GM12878 (cell line): ENCODE measurements at regions of chr6 and their contacts with region 1.

Region 1: DNA sequence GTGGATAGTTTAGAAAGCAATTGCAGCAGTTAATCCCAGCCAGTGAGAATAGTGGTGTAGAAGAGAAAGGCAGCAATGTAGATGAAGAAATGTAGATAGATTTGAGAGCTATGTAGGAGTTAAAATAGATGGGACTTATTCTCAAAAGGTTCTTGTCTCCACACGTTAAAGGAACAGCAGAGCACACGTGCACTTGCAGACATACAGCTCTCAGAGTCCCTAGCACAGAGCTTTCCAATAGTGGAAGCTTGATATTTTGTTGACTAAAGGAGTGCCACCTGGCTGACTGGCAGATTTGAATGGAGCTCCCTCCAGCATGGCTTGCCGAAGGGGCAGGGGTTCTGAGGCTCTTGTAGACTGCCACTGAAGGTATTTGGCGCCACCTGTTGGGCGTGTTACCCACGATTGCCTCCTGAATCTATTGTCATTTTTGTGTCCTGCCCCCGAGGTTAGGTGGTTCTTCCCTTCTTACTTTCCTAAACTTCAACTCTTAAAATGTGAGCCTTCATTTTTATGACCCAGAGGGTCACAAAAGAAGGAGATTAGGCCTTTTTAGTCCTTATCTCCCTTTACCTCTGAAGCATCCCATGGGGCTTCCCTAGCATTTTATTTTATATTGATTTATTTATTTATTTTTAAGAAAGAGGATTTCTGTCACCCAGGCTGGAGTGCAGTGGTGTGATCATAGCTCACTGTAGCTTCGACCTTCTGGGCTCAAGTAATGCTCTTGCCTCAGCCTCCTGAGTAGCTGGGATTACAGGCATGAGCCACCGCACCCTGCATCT is 16.4 kb downstream of the BRD2 start:
- DNase-seq: no peak
- ATAC-seq: peak; percentile 83
- H3K4me3 ChIP-seq: no peak overlapping the region
- H3K27ac ChIP-seq: no peak overlapping the region
- H3K4me1 ChIP-seq: peaks cover 7% of the 10 kb centered on the region; the same call in 1 of the 2 replicates
- H3K27me3 ChIP-seq: no peaks in the 10 kb centered on the region
- CTCF ChIP-seq: peak; percentile 79 to 97 (median 89); a peak in 5 of 6 replicates
- EP300 ChIP-seq: no peak
- POLR2A ChIP-seq: no peak
- RAD21 ChIP-seq: peak; percentile 93

Region 2: GRCh38 chr6:32825966-32826365 is 158.8 kb before region 1 on chr6:
- CTCF ChIA-PET with region 1: interaction called, 12 read pairs
- POLR2A ChIA-PET with region 1: interaction called, 3 read pairs
- RAD21 ChIA-PET with region 1: interaction called, 4 read pairs
- SMC1A ChIA-PET with region 1: interaction called, 9 read pairs
- in situ Hi-C with region 1: no loop called
- intact Hi-C with region 1: no loop called
- DNase-seq: no peak
- ATAC-seq: peak; percentile 36; the same call in 1 of the 3 replicates
- H3K4me3 ChIP-seq: no peak overlapping the region
- H3K27ac ChIP-seq: no peak overlapping the region
- H3K4me1 ChIP-seq: no peaks in the 10 kb centered on the region
- H3K27me3 ChIP-seq: no peaks in the 10 kb centered on the region
- CTCF ChIP-seq: peak; percentile 30 to 55 (median 36); a peak in 4 of 6 replicates
- EP300 ChIP-seq: no peak
- POLR2A ChIP-seq: no peak
- RAD21 ChIP-seq: peak; percentile 39

Region 3: DNA sequence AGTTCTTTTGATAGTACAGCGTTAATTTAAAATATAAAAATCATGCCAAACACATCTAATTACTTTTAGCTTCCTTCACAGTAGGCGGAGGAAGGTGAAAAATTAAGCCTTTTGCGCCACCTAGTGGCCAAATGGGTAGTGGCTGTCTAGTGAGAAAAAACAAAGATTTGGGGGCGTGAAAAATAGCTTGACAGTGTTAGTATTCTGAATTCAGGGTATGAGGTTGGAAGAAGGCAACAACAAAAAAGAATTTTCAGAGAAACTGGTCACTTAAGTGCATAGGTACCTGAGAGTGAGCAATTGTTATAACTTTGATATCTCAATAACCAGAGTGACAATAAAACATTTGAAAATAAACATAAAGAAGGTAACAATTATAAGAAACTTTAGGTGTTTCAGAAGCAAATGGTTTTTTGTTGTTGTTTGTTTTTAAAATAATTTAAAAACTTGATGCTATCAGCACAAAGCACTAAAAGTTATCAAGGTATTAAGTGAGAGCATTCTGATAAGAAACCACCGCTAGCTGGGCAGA is 116.5 kb before region 1 on chr6:
- CTCF ChIA-PET with region 1: interaction called, 34 read pairs
- POLR2A ChIA-PET with region 1: no interaction called
- RAD21 ChIA-PET with region 1: interaction called, 17 read pairs
- SMC1A ChIA-PET with region 1: interaction called, 29 read pairs
- in situ Hi-C with region 1: no loop called
- intact Hi-C with region 1: no loop called
- DNase-seq: no peak
- ATAC-seq: peak; percentile 88
- H3K4me3 ChIP-seq: no peak overlapping the region
- H3K27ac ChIP-seq: no peak overlapping the region
- H3K4me1 ChIP-seq: peaks cover 23% of the 10 kb centered on the region
- H3K27me3 ChIP-seq: no peaks in the 10 kb centered on the region
- CTCF ChIP-seq: peak; percentile 67 to 85 (median 85)
- EP300 ChIP-seq: no peak
- POLR2A ChIP-seq: no peak
- RAD21 ChIP-seq: peak; percentile 84

Region 4: GRCh38 chr6:32906539-32906938 is 78.3 kb before region 1 on chr6:
- CTCF ChIA-PET with region 1: interaction called, 22 read pairs
- POLR2A ChIA-PET with region 1: no interaction called
- RAD21 ChIA-PET with region 1: interaction called, 5 read pairs
- SMC1A ChIA-PET with region 1: interaction called, 27 read pairs
- in situ Hi-C with region 1: no loop called
- intact Hi-C with region 1: no loop called
- DNase-seq: no peak
- ATAC-seq: no peak
- H3K4me3 ChIP-seq: no peak overlapping the region
- H3K27ac ChIP-seq: no peak overlapping the region
- H3K4me1 ChIP-seq: no peaks in the 10 kb centered on the region
- H3K27me3 ChIP-seq: no peaks in the 10 kb centered on the region
- CTCF ChIP-seq: no peak
- EP300 ChIP-seq: no peak
- POLR2A ChIP-seq: no peak
- RAD21 ChIP-seq: no peak

Region 5: DNA sequence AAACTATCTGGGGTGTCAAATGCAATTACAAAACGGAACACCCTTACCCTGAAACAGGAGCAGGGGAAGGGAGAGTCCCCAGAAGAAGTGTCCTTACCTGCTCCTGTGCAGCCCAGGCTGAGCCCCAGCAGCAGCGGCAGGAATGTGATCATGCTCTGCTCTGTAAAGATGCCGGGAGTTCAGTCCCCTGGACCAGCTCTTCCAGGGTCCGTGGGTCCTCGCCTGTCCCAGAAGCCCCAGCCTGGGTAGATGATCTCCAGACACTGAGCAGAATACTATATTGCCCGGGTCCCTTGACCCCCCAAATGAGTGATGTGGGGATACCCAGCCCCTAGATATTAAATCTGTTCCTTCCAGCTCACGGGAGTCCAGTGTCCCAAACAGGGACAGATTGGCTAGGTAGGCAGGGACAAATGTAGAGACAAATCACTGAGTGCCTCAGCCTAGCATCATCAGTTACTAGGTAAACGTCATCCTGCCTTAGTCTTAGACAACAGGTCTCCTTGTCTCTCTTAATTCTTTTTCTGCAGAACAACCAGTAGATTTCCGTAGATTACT is 44.1 kb before region 1 on chr6 and contains the start of gene HLA-DMB:
- CTCF ChIA-PET with region 1: interaction called, 367 read pairs
- POLR2A ChIA-PET with region 1: interaction called, 5 read pairs
- RAD21 ChIA-PET with region 1: interaction called, 135 read pairs
- SMC1A ChIA-PET with region 1: interaction called, 131 read pairs
- in situ Hi-C with region 1: no loop called
- intact Hi-C with region 1: no loop called
- DNase-seq: peak; percentile 97
- ATAC-seq: peak; percentile 74
- H3K4me3 ChIP-seq: peak within 1 kb of the TSS; percentile 79
- H3K27ac ChIP-seq: peak within 1 kb of the TSS; percentile 96
- H3K4me1 ChIP-seq: peaks cover 41% of the 10 kb centered on the region
- H3K27me3 ChIP-seq: no peaks in the 10 kb centered on the region
- CTCF ChIP-seq: no peak
- EP300 ChIP-seq: no peak
- POLR2A ChIP-seq: peak; percentile 71
- RAD21 ChIP-seq: no peak
- polyA plus RNA-seq, gene HLA-DMB: 117 to 170 TPM

Region 6: DNA sequence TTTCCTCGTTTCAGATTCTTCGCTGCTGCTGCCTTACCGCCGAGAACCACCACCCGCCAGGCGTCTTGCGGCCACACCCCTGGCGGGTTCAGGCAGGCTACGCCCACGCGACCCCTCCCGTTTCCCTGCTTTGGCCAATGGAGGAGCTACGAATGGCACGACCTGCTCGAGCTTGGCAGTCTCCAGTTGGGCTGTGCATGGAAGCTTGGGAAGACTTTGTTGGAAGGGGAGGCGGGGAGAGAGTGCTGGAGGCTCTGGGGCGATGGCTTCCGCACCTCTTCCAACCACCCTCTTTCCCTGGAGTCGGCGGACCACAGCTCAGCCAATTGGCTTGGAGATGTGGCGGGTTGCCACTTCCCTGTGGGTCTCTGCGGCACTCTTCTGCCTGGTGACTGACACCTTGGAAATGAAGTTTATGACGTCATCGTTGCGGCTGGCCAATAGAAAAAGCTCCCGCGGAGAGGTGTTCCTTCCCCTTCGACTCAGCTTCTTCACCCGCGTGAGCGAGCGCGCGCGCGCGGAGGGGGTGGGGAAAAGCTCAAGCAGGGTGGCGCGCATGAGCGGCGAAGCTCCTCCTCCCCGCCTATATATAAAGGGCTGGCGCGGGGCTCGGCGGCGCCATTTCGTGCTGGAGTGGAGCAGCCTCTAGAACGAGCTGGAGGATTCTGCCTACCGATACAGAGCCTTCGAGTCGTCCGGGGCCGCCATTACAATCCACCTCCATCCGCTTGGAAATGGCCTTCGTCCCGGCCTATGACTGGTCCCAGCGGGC is 13.0 kb before region 1 on chr6:
- CTCF ChIA-PET with region 1: interaction called, 162 read pairs
- POLR2A ChIA-PET with region 1: interaction called, 28 read pairs
- RAD21 ChIA-PET with region 1: interaction called, 72 read pairs
- SMC1A ChIA-PET with region 1: interaction called, 99 read pairs
- in situ Hi-C with region 1: no loop called
- intact Hi-C with region 1: no loop called
- DNase-seq: peak; percentile 100
- ATAC-seq: peak; percentile 46
- H3K4me3 ChIP-seq: peak overlapping the region; percentile 93
- H3K27ac ChIP-seq: peak overlapping the region; percentile 100
- H3K4me1 ChIP-seq: peaks cover 1% of the 10 kb centered on the region; the same call in 1 of the 2 replicates
- H3K27me3 ChIP-seq: no peaks in the 10 kb centered on the region
- CTCF ChIP-seq: no peak
- EP300 ChIP-seq: peak; percentile 37; a peak in 2 of 4 replicates
- POLR2A ChIP-seq: peak; percentile 70
- RAD21 ChIP-seq: no peak

Region 7: GRCh38 chr6:33271458-33272274 is 286.9 kb after region 1 on chr6 and contains the starts of genes RPS18 and VPS52:
- CTCF ChIA-PET with region 1: no interaction called
- POLR2A ChIA-PET with region 1: no interaction called
- RAD21 ChIA-PET with region 1: no interaction called
- SMC1A ChIA-PET with region 1: no interaction called
- in situ Hi-C with region 1: no loop called
- intact Hi-C with region 1: no loop called
- DNase-seq: peak; percentile 96
- ATAC-seq: peak; percentile 87
- H3K4me3 ChIP-seq: peak within 1 kb of the TSS; percentile 88
- H3K27ac ChIP-seq: peak within 1 kb of the TSS; percentile 97
- H3K4me1 ChIP-seq: peaks cover 18% of the 10 kb centered on the region
- H3K27me3 ChIP-seq: no peaks in the 10 kb centered on the region
- CTCF ChIP-seq: no peak
- EP300 ChIP-seq: peak in 1 of 2 experiments; percentile 52; a peak in 2 of 4 replicates
- POLR2A ChIP-seq: peak; percentile 100
- RAD21 ChIP-seq: no peak
- polyA plus RNA-seq, gene RPS18: 17,270 to 20,828 TPM
- polyA plus RNA-seq, gene VPS52: 11.3 to 13.2 TPM